ENCODE measurements at regions of chr12 and their contacts with region 1.

Region 1: DNA sequence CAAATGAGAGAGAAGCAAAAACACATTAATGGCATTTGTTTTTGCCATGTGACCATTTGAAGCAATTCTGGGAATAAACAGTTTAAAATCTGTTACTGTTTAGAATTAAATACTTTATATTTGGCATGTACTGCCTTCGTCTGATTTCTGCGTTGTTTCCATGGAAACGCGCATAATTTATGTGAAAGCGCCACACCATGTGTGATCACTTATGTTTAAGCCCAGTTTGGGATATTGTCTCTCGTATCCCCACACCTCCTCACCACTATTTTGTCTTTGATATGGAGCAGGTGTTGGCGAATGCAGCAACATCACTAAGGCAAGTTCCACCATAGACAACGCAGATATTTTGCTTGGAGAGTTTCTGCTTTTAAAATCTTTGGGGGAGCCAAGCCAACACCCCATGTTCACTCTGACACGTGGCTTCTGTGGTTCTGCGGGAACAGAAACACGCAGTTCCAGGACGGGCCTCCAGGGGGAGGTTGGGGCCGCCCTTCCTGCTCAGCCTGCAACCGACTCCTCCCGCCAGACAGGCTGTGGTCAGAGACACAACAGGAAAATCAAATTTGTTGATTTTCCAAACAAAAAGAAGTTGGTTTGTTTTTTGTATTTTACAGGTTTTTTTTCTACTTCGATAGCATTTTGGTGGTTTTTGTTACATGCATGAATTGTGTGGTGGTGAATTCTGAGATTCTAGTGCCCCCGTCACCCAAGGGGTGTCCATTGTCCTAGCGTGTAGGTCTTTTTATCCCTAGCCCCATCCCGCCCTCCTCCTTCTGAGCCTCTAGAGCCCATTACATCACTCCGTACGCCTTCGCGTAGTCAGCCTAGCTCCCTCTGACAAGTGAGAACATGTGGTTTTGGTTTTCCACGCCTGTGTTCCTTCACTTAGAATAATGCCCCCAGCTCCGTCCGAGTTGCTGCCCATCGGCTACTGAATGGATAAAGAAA is 101.9 kb upstream of the SFSWAP start:
- DNase-seq: peak; percentile 54
- H3K4me3 Mint-ChIP-seq: no peak overlapping the region
- H3K27ac Mint-ChIP-seq: peak overlapping the region; percentile 44
- H3K4me1 Mint-ChIP-seq: peaks cover 56% of the 10 kb centered on the region
- H3K27me3 Mint-ChIP-seq: peaks cover 4% of the 10 kb centered on the region

Region 2: DNA sequence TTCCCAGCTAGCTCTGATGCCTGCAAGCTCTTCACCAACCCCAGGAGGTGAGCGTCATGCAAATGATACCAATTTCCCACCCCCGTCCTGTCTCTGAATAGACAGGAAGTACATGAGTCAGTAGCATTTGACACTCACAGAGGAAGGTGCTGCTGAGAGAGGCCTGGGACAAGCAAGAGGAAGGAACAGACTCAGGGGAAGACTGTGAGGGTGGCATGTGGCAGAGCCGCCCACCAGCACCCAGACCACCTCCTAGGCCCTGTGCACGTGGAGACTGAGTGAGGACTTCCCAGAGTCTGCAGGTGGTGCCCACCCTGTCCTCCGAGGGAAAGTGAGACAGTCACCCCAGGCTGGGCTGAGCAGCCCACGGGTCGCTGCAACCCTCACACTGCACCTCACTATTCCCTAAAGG is 97.6 kb before region 1 on chr12:
- intact Hi-C with region 1: loop called (anchors 5 kb)
- DNase-seq: peak; percentile 48
- H3K4me3 Mint-ChIP-seq: no peak overlapping the region
- H3K27ac Mint-ChIP-seq: peak overlapping the region; percentile 40
- H3K4me1 Mint-ChIP-seq: peaks cover 15% of the 10 kb centered on the region
- H3K27me3 Mint-ChIP-seq: no peaks in the 10 kb centered on the region

Region 3: DNA sequence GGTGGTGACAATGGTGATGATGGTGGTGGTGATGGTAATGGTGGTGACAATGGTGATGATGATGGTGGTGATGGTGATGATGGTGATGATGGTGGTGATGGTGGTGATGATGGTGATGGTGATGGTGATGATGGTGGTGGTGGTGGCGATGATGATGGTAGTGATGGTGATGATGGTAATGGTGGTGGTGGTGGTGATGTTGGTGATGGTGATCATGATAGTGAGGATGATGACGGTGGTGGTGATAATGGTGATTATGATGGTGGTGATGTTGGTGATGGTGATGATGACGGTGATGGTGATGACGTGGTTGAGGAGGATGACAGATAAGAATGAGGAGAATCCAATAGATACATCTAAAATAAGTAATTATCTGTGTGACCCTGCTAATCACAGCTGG is 68.8 kb before region 1 on chr12:
- intact Hi-C with region 1: loop called (anchors 2 kb)
- DNase-seq: no peak
- H3K4me3 Mint-ChIP-seq: no peak overlapping the region
- H3K27ac Mint-ChIP-seq: no peak overlapping the region
- H3K4me1 Mint-ChIP-seq: peaks cover 4% of the 10 kb centered on the region
- H3K27me3 Mint-ChIP-seq: no peaks in the 10 kb centered on the region

Region 4: GRCh38 chr12:131592972-131593371 is 16.0 kb before region 1 on chr12:
- intact Hi-C with region 1: loop called (anchors 1 kb)
- DNase-seq: peak; percentile 22
- H3K4me3 Mint-ChIP-seq: no peak overlapping the region
- H3K27ac Mint-ChIP-seq: peak overlapping the region; percentile 83
- H3K4me1 Mint-ChIP-seq: peaks cover 15% of the 10 kb centered on the region
- H3K27me3 Mint-ChIP-seq: peaks cover 2% of the 10 kb centered on the region

Region 5: DNA sequence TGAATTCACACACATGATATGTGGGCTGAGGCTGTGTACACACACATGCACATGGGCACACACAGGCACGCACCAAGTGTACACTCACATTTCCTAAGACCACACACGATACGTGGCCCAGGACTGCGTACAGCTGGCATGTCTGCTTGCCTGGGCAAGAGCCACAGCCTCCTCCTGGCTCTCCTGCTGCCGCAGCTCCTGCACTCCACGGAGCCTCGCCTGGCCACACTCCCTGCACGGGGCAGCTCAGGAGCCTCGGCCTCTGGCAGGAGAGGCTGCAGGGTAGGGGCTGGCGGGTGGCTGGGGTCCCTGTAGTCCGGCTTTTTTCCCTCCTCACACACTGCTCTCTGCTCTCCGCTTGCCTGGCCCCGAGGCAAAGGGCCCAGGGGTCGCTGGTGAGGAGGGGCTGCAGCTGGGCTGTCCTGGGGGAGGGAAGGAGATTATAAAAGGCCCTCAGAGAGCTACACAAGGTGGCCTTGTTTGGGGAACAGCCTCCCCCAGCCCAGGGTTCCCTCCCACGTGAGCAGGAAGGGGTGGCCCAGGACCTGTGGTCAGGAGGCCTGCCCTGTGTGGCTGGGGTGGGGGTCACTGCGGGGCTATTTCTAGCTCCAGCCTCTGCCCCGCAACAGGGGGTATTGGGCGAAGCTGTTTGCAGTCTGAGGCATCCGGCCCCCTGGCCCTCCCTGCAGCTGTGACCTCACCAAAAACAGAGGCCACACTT is 12.8 kb after region 1 on chr12:
- intact Hi-C with region 1: loop called (anchors 2 kb)
- DNase-seq: no peak
- H3K4me3 Mint-ChIP-seq: no peak overlapping the region
- H3K27ac Mint-ChIP-seq: no peak overlapping the region
- H3K4me1 Mint-ChIP-seq: no peaks in the 10 kb centered on the region
- H3K27me3 Mint-ChIP-seq: peaks cover 9% of the 10 kb centered on the region

Region 6: DNA sequence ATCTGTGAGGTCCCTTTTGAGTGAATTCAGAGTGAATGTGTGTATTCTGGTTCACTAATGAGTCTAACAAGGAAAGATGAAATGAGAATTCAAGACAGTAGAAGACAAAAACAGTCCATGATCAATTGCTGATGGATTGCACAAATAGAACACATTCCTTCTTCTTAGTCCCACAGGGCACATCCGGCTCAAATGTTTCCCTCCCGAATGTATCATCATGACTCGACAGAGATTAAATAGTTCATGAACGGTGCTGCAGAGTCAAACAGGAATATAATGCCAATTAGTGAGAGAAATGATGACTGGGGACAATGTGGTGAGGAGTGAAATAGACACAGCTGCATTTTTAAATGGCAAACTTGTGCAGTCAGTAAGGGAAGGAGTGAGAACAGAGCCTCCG is 90.4 kb after region 1 on chr12:
- intact Hi-C with region 1: no loop called
- DNase-seq: no peak
- H3K4me3 Mint-ChIP-seq: no peak overlapping the region
- H3K27ac Mint-ChIP-seq: no peak overlapping the region
- H3K4me1 Mint-ChIP-seq: no peaks in the 10 kb centered on the region
- H3K27me3 Mint-ChIP-seq: peaks cover 9% of the 10 kb centered on the region

Region 7: GRCh38 chr12:131710464-131711457 is 101.7 kb after region 1 on chr12 and contains the start of gene SFSWAP:
- intact Hi-C with region 1: loop called (anchors 2 kb)
- DNase-seq: peak; percentile 72
- H3K4me3 Mint-ChIP-seq: peak within 1 kb of the TSS; percentile 93
- H3K27ac Mint-ChIP-seq: peak within 1 kb of the TSS; percentile 92
- H3K4me1 Mint-ChIP-seq: peaks cover 26% of the 10 kb centered on the region
- H3K27me3 Mint-ChIP-seq: peaks cover 4% of the 10 kb centered on the region
- total RNA-seq, gene SFSWAP: 65.3 and 69.3 TPM in 2 replicates

Region 8: DNA sequence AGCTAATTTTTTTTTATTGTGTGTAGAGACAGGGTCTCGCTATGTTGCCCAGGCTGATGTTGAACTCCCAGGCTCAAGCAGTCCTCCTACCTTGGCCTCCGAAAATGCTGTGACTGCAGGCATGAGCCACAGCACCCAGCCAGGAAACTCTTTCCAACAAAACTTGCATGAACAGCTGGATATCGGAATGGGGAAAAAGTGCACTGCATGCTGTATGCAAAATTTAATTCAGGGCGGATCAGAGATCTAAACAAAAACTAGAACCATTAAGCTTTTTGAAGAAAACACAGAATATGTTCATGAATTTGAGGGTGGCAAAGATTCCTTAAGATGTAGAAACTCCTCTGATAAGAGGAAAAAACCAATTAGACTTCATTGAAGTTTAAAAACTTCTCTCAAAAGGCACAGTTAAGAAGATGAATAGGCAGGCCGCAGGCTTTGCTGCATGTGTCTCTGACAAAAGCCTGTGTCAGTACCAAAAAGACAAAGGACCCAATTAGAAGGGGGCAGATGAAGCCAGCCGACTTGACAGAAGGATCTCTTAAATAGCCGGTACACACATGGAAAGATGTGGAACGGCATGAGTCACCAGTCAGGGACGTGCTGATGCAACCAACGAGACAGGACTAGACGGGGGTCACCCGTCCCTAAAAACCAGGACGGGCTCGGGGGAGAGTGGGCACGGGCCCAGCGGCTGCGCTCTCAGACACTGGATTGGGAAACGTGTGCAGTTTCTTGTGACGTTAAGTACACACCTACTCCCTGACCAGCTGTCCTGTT is 184.4 kb after region 1 on chr12:
- intact Hi-C with region 1: no loop called
- DNase-seq: no peak
- H3K4me3 Mint-ChIP-seq: no peak overlapping the region
- H3K27ac Mint-ChIP-seq: no peak overlapping the region
- H3K4me1 Mint-ChIP-seq: no peaks in the 10 kb centered on the region
- H3K27me3 Mint-ChIP-seq: no peaks in the 10 kb centered on the region

Region 9: GRCh38 chr12:131894313-131894860 is 285.4 kb after region 1 on chr12 and contains the start of gene ULK1:
- intact Hi-C with region 1: loop called (anchors 10 kb)
- DNase-seq: peak; percentile 91
- H3K4me3 Mint-ChIP-seq: peak within 1 kb of the TSS; percentile 86
- H3K27ac Mint-ChIP-seq: peak within 1 kb of the TSS; percentile 78
- H3K4me1 Mint-ChIP-seq: no peaks in the 10 kb centered on the region
- H3K27me3 Mint-ChIP-seq: peaks cover 5% of the 10 kb centered on the region
- total RNA-seq, gene ULK1: 28.4 TPM in 2 replicates

Measured in activated T-helper 1 cell treated with anti-CD3 and anti-CD28 coated beads, Interleukin-12 subunit alpha, Interleukin-12 subunit beta, Interleukin-2, Interleukin-4 antibody, amounts not matched to agents 30 ng/mL and 10 ng/mL and 1 ng/mL, durations not matched to agents 14 hours and 24 hours and 36 hours (primary cell).